HEK293T (cell line): ENCODE measurements at regions of chr5 and their contacts with region 1.

Region 1: GRCh38 chr5:34898258-34898895 is 16.9 kb downstream of the RAD1 start:
- DNase-seq: peak; percentile 67

Region 2: GRCh38 chr5:34486160-34486848 is 412.1 kb before region 1 on chr5:
- CTCF ChIA-PET with region 1: interaction called, 10 read pairs
- POLR2A ChIA-PET with region 1: no interaction called
- DNase-seq: peak; percentile 76

Region 3: DNA sequence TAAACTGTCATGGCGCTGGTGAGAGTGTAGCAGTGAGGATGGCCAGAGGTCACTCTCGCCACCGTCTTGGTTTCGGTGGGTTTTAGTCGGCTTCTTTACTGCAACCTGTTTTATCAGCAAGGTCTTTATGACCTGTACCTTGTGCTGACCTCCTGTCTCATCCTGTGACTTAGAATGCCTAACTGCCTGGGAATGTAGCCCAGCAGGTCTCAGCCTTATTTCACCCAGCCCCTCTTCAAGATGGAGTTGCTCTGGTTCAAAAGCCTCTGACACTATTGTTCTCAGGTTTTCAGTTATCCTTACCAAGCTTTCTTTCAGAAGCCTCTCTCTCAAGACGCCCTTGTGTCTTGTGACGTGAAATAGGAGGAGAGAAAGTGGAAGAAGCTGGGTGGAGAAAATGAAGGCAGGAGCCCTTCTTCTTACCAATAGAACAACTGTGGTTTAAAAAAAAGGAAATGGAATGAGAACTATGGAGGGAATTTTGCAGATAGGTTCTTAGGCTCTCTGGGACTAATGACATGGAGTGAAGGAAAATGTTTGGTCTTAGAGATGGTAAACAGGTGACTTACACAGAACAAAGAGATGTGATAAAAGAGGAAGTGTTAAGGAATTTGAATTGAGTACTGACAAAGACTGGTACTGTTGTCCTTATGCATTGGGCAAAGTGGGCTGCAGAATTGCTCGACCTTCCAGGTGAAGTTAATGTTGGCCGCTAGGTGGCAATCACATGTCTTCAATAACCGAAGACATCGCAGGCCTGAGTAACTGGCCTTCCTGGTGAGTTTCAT is 375.6 kb before region 1 on chr5:
- CTCF ChIA-PET with region 1: interaction called, 32 read pairs
- POLR2A ChIA-PET with region 1: no interaction called
- DNase-seq: peak; percentile 76